ENCODE measurements at regions of chr10 and their contacts with region 1.

Region 1: GRCh38 chr10:23530079-23530478 is 91.2 kb downstream of the OTUD1 start:
- DNase-seq: no peak
- ATAC-seq: no peak
- H3K4me3 Mint-ChIP-seq: no peak overlapping the region
- H3K27ac Mint-ChIP-seq: no peak overlapping the region
- H3K4me1 Mint-ChIP-seq: no peaks in the 10 kb centered on the region
- H3K27me3 Mint-ChIP-seq: no peaks in the 10 kb centered on the region
- CTCF ChIP-seq: no peak

Region 2: DNA sequence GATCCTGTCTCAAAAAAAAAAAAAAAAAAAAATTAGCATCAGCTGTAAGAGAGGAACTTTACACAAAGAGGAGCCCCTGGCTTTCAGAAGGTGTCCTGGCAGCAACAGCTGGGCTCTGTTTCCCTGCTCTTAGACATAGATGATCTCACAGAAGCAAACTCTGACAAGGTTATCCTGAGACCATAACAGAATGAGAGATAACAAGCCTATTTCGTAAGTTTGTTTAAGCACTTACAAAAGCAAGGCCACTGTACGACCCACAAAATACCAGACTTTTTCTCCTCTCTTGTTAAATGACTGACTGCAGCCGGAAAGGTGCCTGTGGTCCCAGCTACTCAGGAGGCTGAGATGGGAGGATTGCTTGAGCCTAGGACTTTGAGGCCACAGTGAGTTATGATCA is 124.5 kb before region 1 on chr10:
- CTCF ChIA-PET with region 1: no interaction called
- POLR2A ChIA-PET with region 1: interaction called, 10 read pairs
- DNase-seq: no peak
- ATAC-seq: no peak
- H3K4me3 Mint-ChIP-seq: no peak overlapping the region
- H3K27ac Mint-ChIP-seq: no peak overlapping the region
- H3K4me1 Mint-ChIP-seq: peaks cover 29% of the 10 kb centered on the region
- H3K27me3 Mint-ChIP-seq: no peaks in the 10 kb centered on the region
- CTCF ChIP-seq: no peak

Region 3: GRCh38 chr10:23516530-23516929 is 13.5 kb before region 1 on chr10:
- CTCF ChIA-PET with region 1: interaction called, 11 read pairs
- POLR2A ChIA-PET with region 1: no interaction called
- DNase-seq: no peak
- ATAC-seq: peak; percentile 80
- H3K4me3 Mint-ChIP-seq: no peak overlapping the region
- H3K27ac Mint-ChIP-seq: no peak overlapping the region
- H3K4me1 Mint-ChIP-seq: no peaks in the 10 kb centered on the region
- H3K27me3 Mint-ChIP-seq: no peaks in the 10 kb centered on the region; the same call in 1 of the 2 replicates
- CTCF ChIP-seq: no peak

Region 4: DNA sequence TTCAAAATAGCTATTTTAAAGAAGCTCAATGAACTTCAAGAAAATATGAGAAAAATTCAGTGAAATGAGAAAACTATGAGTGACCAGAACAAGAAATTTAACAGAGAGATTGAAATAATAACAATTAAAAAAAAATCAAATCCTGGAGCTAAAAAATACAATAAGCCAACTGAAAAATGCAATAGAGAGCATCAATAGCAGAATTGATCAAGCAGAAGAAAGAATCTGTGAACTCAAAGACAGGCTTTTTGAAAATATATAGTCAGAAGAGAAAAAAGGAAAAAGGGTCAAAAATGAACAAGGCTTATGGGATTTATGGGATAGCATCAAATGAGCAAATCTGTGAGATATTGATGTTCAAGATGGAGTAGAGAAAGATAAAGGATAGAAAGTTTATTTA is 41.8 kb after region 1 on chr10:
- CTCF ChIA-PET with region 1: no interaction called
- POLR2A ChIA-PET with region 1: no interaction called
- DNase-seq: no peak
- ATAC-seq: no peak
- H3K4me3 Mint-ChIP-seq: no peak overlapping the region
- H3K27ac Mint-ChIP-seq: no peak overlapping the region
- H3K4me1 Mint-ChIP-seq: 0 out of 2 replicates have a peak, but pooled peaks cover 3% of the 10 kb centered on the region
- H3K27me3 Mint-ChIP-seq: peaks cover 26% of the 10 kb centered on the region
- CTCF ChIP-seq: no peak